Right cardiac atrium (tissue), 5 donors: ENCODE measurements at regions of chr12 and their contacts with region 1.

Region 1: GRCh38 chr12:49623142-49623904 is at the start of gene PRPF40B:
- DNase-seq: peak; percentile 89 to 96 (median 95)
- ATAC-seq: peak; percentile 89 to 94
- H3K4me3 ChIP-seq: peak within 1 kb of the TSS; percentile 56
- H3K27ac ChIP-seq: peak within 1 kb of the TSS; percentile 68
- H3K4me1 ChIP-seq: peaks cover 2% of the 10 kb centered on the region
- H3K27me3 ChIP-seq: no peaks in the 10 kb centered on the region
- total RNA-seq, gene PRPF40B: 19.2 to 26.7 (median 22.1) TPM

Region 2: DNA sequence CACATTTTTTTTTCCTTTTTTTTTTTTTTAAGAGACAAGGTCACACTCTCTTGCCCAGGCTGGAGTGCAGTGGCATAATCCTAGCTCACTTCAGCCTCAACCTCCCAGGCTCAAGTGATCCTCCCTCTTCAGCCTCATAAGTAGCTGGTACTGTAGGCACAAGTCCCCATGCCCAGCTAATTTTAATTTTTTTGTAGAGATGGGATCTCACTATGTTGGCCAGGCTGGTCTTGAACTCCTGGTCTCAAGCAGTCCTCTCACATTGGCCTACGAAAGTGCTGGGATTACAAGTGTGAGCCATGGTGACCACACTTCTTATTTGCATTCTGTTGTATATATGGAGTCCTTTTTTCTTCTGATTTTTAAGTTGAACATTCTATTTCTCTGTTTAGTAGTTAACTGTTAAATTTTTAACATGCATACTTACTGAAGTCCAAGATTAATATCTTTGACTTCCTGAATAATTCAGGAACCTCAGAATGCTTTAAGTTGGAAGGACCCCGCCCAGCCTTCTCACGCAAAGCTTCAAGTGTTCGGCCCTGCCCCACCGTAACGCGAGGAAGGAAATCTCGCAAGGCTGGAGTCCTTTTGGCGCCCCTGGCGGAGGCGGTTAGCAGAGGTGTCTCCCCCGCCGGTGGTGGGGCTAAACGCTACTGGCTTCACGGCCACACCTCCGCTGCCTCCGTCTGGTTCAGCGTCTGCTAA is 234.5 kb before region 1 on chr12:
- intact Hi-C with region 1: no loop called
- DNase-seq: peak; percentile 29 to 84 (median 75)
- ATAC-seq: no peak
- H3K4me3 ChIP-seq: no peak overlapping the region
- H3K27ac ChIP-seq: no peak overlapping the region
- H3K4me1 ChIP-seq: no peaks in the 10 kb centered on the region
- H3K27me3 ChIP-seq: no peaks in the 10 kb centered on the region

Region 3: DNA sequence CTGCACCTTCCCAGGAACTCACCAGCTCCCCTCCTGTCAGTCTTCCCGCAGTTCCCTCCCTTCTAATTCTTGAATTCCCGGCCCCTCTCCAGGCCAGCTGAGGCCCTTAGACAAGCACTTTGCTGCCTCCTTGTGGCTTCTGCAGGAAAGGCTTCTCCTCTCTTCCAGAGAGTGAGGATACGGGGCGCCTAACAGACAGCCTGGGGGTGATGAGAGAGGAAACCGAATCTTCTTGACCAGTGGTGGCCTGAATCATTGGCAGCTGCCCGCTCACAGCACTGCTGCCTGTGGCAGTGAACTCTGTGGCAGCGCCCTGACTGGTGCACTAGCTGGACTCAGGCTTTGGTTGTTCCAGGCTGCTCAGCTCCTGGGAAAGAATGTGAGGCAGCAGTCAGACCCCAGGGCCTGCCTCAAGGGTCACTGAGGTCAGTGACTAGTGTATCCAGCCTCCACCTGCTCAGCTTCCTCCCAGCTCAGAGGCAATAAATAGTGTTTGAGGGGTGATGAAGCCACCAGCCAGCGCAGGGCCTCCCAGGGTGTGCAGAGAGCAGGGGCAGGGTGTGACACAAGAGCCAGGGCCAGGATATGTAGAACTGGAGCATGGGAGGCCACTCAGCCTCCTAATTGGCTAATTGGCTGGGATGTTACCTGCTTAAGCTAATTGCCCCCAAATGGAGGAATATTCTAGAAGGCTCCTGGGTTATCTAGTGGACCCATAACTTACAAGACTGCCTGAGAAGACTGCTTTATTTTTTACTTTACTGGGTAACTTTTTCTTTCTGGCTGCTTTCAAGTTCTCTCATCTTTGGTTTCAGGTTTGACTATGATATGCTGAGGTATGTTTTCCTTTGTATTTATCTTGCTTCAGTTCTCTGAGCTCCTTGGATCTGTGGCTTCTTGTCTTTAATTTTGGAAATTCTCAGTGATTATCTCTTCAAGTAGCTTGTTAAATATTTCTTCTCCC is 42.5 kb before region 1 on chr12:
- intact Hi-C with region 1: loop called in 1 of 4 experiments (anchors 5 kb)
- DNase-seq: peak; percentile 76 to 89 (median 83)
- ATAC-seq: peak; percentile 68 to 77
- H3K4me3 ChIP-seq: no peak overlapping the region
- H3K27ac ChIP-seq: peak overlapping the region; percentile 42
- H3K4me1 ChIP-seq: peaks cover 12% of the 10 kb centered on the region
- H3K27me3 ChIP-seq: no peaks in the 10 kb centered on the region

Region 4: GRCh38 chr12:49945394-49946080 is 322.2 kb after region 1 on chr12:
- intact Hi-C with region 1: no loop called
- DNase-seq: peak; percentile 89 to 95 (median 95)
- ATAC-seq: peak; percentile 93 to 96
- H3K4me3 ChIP-seq: no peak overlapping the region
- H3K27ac ChIP-seq: peak overlapping the region; percentile 26
- H3K4me1 ChIP-seq: no peaks in the 10 kb centered on the region
- H3K27me3 ChIP-seq: no peaks in the 10 kb centered on the region